PC-9 (cell line): ENCODE measurements at regions of chr13 and their contacts with region 1.

Region 1: GRCh38 chr13:106349080-106349931 is 186.2 kb downstream of the EFNB2 start:
- DNase-seq: peak; percentile 59 to 91
- H3K4me3 ChIP-seq: peak overlapping the region; percentile 52
- H3K27ac ChIP-seq: peak overlapping the region; percentile 84
- H3K4me1 ChIP-seq: peaks cover 40% of the 10 kb centered on the region
- H3K27me3 ChIP-seq: no peaks in the 10 kb centered on the region
- CTCF ChIP-seq: no peak

Region 2: DNA sequence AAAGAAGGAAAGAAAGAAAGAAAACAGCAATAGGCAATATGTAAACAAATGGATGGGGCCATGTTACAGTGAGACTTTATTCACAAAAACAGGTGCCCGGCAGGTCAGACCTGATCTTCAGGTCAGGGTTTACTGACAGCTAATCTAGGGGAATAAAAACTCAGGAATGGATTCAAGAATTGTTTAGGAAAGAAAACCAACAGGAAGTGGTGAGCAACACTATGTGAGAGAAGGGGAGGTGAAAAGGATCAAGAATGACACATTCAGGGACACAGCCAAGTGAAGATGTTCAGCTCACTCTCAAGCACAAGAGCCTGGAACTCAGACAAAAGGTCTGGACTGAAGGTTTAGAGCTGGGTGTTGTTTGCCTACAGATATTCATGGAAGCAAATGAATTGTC is 58.3 kb before region 1 on chr13:
- CTCF ChIA-PET with region 1: no interaction called
- POLR2A ChIA-PET with region 1: interaction called, 3 read pairs
- intact Hi-C with region 1: loop called (anchors 2 kb)
- DNase-seq: peak; percentile 62 to 90
- H3K4me3 ChIP-seq: no peak overlapping the region
- H3K27ac ChIP-seq: peak overlapping the region; percentile 55
- H3K4me1 ChIP-seq: peaks cover 14% of the 10 kb centered on the region
- H3K27me3 ChIP-seq: no peaks in the 10 kb centered on the region
- CTCF ChIP-seq: no peak

Region 3: DNA sequence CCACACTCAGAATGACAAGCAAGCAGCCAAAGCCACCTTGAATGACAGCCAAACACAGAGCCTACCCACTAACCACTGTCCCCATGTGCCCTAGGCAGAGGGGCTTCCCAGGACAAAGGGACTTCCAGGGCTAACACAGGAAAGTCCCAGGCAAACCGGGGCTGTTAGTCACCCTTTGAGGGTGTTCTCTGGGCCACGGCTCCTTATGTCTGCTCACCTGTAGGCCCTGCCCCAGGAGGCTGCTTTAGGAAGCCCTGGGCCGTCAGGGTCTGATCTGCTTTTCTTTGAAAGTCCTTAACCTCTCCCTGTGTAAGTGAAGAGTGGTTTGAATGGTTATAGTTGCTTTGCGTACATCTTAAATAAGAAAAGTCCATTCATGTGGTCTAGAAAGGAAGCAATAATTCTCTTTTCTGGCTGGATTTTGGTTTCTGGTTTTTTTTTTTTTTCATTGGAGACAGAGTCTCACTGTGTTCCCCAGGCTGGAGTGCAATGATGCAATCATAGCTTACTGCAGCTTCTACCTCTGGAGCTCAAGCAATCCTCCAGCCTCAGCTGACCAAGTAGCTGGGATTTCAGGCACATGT is 24.8 kb after region 1 on chr13:
- CTCF ChIA-PET with region 1: no interaction called
- POLR2A ChIA-PET with region 1: no interaction called
- intact Hi-C with region 1: loop called (anchors 2 kb)
- DNase-seq: no peak
- H3K4me3 ChIP-seq: no peak overlapping the region
- H3K27ac ChIP-seq: no peak overlapping the region
- H3K4me1 ChIP-seq: peaks cover 21% of the 10 kb centered on the region
- H3K27me3 ChIP-seq: no peaks in the 10 kb centered on the region
- CTCF ChIP-seq: no peak

Region 4: DNA sequence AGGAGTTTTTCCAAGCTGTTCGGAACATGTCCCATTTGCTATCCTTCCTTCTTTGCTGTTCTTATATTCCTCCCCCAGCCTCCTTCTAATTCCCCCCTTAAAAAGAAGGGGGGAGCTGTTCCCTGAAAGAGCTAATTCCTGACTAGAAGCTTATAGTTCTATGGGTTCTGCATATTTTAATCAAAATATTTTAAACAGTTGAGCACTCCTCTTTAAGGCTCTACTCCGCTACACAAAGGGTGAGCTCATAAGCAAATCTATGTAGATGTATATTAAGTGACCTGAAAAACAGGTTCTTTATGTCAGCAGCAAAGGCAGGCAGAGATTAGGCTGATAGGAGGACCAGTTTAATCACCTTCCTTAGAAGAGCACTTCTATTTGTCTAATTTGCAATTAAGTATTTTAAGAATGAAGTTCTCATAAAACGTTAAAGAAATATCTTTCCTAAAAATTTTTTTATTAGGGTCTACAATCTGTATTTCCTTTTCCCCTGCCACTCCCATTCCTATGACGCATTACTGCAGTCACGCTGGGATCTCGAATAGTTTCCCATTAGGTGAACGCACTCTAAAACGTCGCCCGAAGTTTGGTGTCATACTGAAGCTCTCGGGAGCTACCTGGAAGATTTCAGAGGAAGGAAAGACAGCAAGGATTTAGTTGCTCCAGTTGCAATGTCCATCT is 181.0 kb after region 1 on chr13:
- CTCF ChIA-PET with region 1: no interaction called
- POLR2A ChIA-PET with region 1: no interaction called
- intact Hi-C with region 1: loop called (anchors 1 kb)
- DNase-seq: peak; percentile 43 to 92
- H3K4me3 ChIP-seq: peak overlapping the region; percentile 72
- H3K27ac ChIP-seq: peak overlapping the region; percentile 83
- H3K4me1 ChIP-seq: peaks cover 53% of the 10 kb centered on the region
- H3K27me3 ChIP-seq: no peaks in the 10 kb centered on the region
- CTCF ChIP-seq: no peak

Region 5: GRCh38 chr13:106548064-106548696 is 198.9 kb after region 1 on chr13:
- CTCF ChIA-PET with region 1: no interaction called
- POLR2A ChIA-PET with region 1: no interaction called
- intact Hi-C with region 1: no loop called
- DNase-seq: no peak
- H3K4me3 ChIP-seq: no peak overlapping the region
- H3K27ac ChIP-seq: no peak overlapping the region
- H3K4me1 ChIP-seq: no peaks in the 10 kb centered on the region
- H3K27me3 ChIP-seq: no peaks in the 10 kb centered on the region
- CTCF ChIP-seq: no peak